ENCODE measurements at regions of chr11 and their contacts with region 1.

Region 1: DNA sequence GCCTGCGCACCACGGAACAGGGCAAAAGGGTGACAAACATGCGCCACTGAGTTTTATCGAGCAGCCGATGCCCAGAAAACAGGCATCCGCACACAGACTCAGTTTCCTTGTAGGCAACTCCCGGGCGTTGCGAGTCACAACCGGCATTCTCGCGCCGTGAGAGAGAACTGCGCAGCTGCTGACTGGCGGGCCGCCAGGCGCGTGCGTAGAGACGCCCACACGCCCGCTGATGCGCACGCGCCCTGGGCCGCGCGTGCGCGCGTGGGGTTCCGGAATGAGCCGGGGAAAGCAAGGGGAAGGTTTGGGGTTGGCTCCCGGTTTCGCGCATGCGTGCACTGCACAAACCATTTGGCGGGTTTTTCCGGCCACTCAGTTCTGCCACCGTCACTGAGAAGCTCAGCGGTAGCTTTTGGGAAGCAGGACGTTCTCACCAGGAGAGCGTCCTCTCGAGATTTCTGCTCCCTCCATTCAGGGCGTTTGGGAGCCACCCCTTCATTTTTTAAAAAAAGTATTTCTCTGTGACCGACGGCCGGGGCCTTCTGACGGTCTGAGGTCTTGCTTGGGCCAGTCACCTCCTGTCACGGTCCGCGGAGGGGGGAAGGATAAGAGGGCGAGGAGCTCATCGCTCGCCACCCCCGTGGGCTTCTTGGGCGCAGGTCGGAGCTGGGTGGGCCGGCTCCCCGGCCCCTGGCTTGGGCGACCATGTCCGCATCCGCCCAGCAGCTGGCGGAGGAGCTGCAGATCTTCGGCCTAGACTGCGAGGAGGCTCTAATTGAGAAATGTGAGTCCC is at the start of gene POLA2:
- DNase-seq: peak; percentile 86 to 92
- H3K4me3 ChIP-seq: peak within 1 kb of the TSS; percentile 74 to 83 (median 81)
- H3K27ac ChIP-seq: peak within 1 kb of the TSS; percentile 46
- H3K4me1 ChIP-seq: peaks cover 0 to 3% (median under 1%) of the 10 kb centered on the region in 4 experiments; a peak in 2 of 7 replicates
- H3K27me3 ChIP-seq: no peaks in the 10 kb centered on the region
- CTCF ChIP-seq: no peak
- EP300 ChIP-seq: no peak
- POLR2A ChIP-seq: peak in 1 of 2 experiments; percentile 75; a peak in 2 of 3 replicates
- RAD21 ChIP-seq: no peak
- total RNA-seq, gene POLA2: 31.2 and 34.6 TPM in 2 replicates

Region 2: DNA sequence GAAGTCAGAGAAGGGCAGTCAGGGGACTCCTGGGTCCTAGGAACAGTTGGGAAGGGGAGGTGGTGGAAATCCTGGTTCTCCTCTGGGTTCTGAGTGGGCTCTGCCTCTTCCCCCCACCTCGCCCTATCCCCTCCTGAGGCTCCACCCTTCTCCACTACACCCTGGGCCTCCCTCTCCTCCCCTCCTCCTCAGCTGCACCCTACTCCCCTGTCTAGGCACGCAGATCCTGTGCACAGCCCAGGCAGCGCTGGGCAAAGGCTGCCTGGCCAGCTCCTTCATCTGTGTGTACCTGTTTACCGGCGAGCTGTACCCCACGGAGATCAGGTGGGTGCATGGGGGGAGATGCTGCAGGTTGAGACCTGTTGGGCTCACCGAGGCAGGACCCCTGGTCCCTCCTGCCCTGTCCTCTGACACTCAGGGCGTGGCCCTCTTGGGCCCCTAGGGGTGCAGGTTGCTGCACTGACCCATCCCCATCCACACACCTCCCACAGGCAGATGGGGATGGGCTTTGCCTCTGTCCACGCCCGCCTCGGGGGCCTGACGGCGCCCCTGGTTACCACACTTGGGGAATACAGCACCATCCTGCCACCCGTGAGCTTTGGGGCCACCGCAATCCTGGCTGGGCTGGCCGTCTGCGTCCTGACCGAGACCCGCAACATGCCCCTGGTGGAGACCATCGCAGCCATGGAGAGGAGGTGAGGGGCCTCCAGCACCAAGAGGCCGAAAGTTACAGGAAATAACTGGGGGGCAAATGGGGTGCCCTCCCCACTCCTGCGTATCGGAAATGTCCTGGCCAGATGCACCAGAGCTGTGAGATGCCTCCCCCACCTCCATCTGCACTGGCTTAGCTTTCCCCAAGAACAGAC is 25.4 kb before region 1 on chr11:
- CTCF ChIA-PET with region 1: no interaction called
- POLR2A ChIA-PET with region 1: no interaction called
- DNase-seq: no peak
- H3K4me3 ChIP-seq: no peak overlapping the region
- H3K27ac ChIP-seq: no peak overlapping the region
- H3K4me1 ChIP-seq: no peaks in the 10 kb centered on the region
- H3K27me3 ChIP-seq: no peaks in the 10 kb centered on the region
- CTCF ChIP-seq: no peak
- EP300 ChIP-seq: no peak
- POLR2A ChIP-seq: no peak
- RAD21 ChIP-seq: no peak

Region 3: DNA sequence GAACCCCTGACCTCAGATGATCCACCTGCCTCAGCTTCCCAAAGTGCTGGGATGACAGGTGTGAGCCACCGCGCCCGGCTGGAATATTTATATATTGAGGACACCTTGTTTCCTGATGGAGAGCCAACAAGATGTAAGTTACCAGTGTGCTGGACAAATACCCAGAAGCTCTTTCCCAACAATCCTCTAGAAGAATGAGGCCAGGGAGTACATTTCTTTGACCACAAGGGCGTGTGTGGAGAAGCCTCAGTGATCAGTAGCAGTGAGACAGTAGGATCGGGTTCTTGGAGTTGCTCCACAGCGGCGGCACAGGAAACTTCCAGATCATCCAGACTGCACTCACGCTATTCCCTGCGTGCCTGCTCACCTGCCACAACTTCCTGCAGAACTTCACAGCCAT is 10.3 kb before region 1 on chr11:
- CTCF ChIA-PET with region 1: interaction called, 25 read pairs
- POLR2A ChIA-PET with region 1: interaction called, 3 read pairs
- DNase-seq: no peak
- H3K4me3 ChIP-seq: no peak overlapping the region
- H3K27ac ChIP-seq: no peak overlapping the region
- H3K4me1 ChIP-seq: no peaks in the 10 kb centered on the region; a peak in 2 of 7 replicates
- H3K27me3 ChIP-seq: no peaks in the 10 kb centered on the region
- CTCF ChIP-seq: no peak
- EP300 ChIP-seq: no peak
- POLR2A ChIP-seq: no peak
- RAD21 ChIP-seq: no peak

Region 4: DNA sequence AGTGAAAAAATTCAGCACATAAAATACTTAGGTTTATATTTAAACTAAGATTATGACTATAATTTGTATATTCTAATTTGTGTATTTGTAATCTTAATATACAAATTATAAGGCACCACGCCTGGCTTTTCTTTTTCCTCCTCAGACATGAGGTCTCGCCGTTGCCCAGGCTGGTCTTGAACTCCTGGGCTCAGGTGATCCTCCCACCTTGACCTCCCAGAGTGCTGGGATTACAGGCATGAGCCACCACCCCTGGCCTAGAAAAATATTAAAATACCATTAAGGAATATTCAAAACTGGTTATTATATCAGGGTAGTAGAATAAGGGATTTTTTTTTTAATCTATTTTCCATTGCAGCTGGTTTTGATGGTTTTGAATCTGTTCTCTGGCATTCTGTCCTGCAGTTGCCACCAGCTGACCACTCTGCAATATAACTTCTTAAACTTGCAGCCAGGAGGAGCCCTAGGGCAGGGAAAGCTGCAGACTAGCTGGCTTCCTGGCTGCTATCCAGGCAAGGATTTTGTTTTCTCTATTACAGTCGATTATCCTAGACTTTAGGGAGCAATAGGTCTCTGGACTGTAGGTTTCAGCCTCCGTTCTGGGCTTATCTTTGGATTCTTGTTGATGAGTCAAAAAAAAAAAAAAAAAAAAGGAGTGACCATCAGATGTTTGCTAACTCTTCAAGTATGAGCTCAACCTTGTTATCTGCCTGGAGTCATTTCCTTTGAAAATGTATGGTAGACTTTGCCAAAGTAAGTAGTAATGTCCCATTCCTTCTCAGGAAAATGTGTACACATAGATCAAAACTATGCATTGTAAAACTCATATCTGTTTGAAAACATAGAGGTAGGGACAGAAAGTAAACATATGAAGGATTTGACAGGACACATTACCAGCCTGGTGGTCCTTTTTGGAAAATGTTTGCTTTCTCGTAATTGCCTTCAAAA is 13.2 kb after region 1 on chr11:
- CTCF ChIA-PET with region 1: interaction called, 23 read pairs
- POLR2A ChIA-PET with region 1: interaction called, 7 read pairs
- DNase-seq: peak in 1 of 2 experiments; percentile 29
- H3K4me3 ChIP-seq: no peak overlapping the region
- H3K27ac ChIP-seq: no peak overlapping the region
- H3K4me1 ChIP-seq: no peaks in the 10 kb centered on the region; a peak in 1 of 7 replicates
- H3K27me3 ChIP-seq: no peaks in the 10 kb centered on the region
- CTCF ChIP-seq: peak; percentile 65 to 95 (median 81)
- EP300 ChIP-seq: no peak
- POLR2A ChIP-seq: no peak
- RAD21 ChIP-seq: peak; percentile 87 to 94